HepG2 (cell line): ENCODE measurements at regions of chr4 and their contacts with region 1.

Region 1: GRCh38 chr4:82419451-82419850 is 10.8 kb downstream of the HNRNPDL start:
- DNase-seq: no peak
- ATAC-seq: no peak
- H3K4me3 ChIP-seq: no peak overlapping the region
- H3K27ac ChIP-seq: no peak overlapping the region
- H3K4me1 ChIP-seq: peaks cover 17% of the 10 kb centered on the region; the same call in 1 of the 2 replicates
- H3K27me3 ChIP-seq: no peaks in the 10 kb centered on the region
- CTCF ChIP-seq: no peak
- EP300 ChIP-seq: no peak
- POLR2A ChIP-seq: no peak
- RAD21 ChIP-seq: no peak

Region 2: DNA sequence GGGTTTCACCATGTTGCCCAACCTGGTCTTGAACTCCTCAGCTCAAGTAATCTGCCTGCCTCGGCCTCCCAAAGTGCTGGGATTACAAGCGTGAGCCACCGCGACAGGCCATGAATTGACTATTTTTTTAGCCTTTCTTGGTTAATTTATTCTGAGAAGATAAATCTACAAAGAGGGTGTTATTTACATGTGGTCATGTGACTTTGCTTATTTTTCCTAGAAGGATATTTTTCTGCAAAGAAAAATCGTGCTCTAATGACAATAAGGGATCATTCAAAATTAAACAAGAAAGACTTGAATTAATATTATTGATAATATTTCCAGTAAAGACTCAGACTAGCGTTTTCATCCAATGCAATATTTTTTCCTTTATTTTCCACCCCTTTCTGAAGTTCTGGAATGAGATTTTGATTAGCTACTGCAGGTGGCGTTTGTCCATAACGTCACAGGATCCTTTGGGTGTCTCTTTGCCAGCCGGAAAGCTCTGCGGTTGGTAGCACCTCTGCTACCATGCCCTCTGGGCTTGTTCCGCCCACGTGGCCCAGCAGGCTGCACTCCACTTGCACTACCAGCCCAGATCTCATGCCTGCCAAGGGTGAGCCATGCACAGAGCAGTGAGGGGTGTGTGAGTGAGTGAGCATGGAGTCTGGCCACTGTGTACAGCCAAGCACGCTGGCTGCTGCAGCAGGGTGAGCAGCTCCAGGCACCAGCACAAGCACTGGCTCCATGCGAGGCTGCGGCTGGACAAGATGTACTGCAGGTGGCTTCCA is 39.3 kb before region 1 on chr4:
- CTCF ChIA-PET with region 1: no interaction called
- POLR2A ChIA-PET with region 1: no interaction called
- in situ Hi-C with region 1: loop called (anchors 5 kb)
- intact Hi-C with region 1: no loop called
- DNase-seq: no peak
- ATAC-seq: peak; percentile 64
- H3K4me3 ChIP-seq: no peak overlapping the region
- H3K27ac ChIP-seq: no peak overlapping the region
- H3K4me1 ChIP-seq: peaks cover 11% of the 10 kb centered on the region
- H3K27me3 ChIP-seq: no peaks in the 10 kb centered on the region
- CTCF ChIP-seq: no peak
- EP300 ChIP-seq: no peak
- POLR2A ChIP-seq: no peak
- RAD21 ChIP-seq: no peak